H1 (cell line): ENCODE measurements at regions of chr2 and their contacts with region 1.

Region 1: GRCh38 chr2:74142340-74142739 is 5.4 kb downstream of the BOLA3 start:
- DNase-seq: no peak
- H3K4me3 ChIP-seq: no peak overlapping the region
- H3K27ac ChIP-seq: no peak overlapping the region
- H3K4me1 ChIP-seq: peaks cover 0 to 5% (median 2%) of the 10 kb centered on the region in 4 experiments; a peak in 3 of 7 replicates
- H3K27me3 ChIP-seq: no peaks in the 10 kb centered on the region
- CTCF ChIP-seq: peak; percentile 44 to 72 (median 46)
- EP300 ChIP-seq: no peak
- POLR2A ChIP-seq: no peak
- RAD21 ChIP-seq: peak; percentile 48 to 64

Region 2: DNA sequence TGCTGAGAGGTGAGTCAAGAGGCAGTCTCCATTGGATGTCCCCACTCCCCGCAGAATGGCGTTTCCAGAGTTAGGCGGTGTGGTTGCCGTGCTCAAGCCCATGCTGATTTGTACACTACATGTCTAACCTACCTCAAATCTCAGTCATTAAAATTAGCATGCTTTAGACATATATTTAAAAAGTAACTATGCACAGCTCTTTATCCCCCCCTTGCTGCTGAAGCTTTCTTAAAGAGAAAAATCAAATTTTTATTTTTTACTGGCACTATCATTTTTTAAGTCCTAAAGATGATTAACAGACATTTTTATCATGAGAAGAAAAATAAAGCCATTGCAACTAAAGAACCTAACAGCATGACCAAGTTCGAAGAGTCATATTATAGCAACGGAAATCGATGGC is 37.5 kb before region 1 on chr2:
- CTCF ChIA-PET with region 1: interaction called, 10 read pairs
- POLR2A ChIA-PET with region 1: interaction called, 3 read pairs
- DNase-seq: no peak
- H3K4me3 ChIP-seq: no peak overlapping the region
- H3K27ac ChIP-seq: no peak overlapping the region
- H3K4me1 ChIP-seq: peaks cover 4 to 13% (median 12%) of the 10 kb centered on the region in 4 experiments
- H3K27me3 ChIP-seq: no peaks in the 10 kb centered on the region
- CTCF ChIP-seq: no peak
- EP300 ChIP-seq: no peak
- POLR2A ChIP-seq: no peak
- RAD21 ChIP-seq: 0 out of 4 replicates have a peak, but pooled peaks of 1 of the 2 experiments have one; percentile 0

Region 3: DNA sequence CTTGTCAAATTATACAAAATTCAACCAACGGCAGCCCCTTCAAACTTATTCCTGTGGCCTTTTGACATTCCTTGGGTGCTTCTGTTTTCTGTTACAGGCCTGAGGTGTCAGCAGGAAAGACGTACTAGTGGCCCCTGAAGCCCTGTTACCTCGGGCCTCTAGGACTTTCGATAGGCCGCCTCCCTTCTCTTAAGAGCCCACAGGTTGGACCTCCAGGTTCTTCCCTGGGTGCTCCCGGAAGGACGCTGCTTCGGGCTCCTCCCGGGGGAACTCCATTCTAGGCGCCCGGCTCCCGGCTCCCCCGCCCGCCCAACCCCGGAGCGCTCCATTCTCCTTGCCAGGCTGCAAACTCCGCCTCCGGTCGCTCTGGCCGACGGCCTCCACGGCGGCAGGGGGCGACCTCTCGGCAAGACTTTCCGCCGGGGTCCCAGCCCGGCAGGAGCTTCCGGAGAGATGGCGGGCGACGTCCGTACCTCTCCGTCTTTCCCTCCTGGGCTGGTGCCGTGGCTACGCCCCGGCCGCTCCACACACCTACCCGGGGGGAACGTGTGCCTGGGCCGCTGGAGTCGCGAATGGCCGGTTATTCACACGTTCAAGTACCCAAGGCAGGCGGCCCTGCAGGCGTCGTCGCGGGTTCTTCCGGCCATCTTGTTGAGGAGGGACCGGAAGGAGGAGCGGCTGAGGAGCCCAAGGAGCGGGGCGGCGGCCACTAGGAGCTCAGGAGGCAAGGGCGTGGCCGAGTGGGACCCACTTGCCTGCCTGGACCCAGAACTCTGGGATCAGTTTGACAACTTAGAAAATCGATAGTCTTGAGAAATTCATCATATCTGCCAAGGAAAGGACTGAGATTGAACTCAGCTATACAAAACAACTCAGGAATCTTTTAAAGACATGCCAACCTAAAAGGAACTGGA is 22.2 kb before region 1 on chr2:
- CTCF ChIA-PET with region 1: interaction called, 48 read pairs
- POLR2A ChIA-PET with region 1: interaction called, 10 read pairs
- DNase-seq: peak; percentile 54 to 82
- H3K4me3 ChIP-seq: peak overlapping the region; percentile 62 to 80 (median 70)
- H3K27ac ChIP-seq: peak overlapping the region; percentile 88
- H3K4me1 ChIP-seq: no peaks in the 10 kb centered on the region
- H3K27me3 ChIP-seq: peaks cover 0 to 7% (median 0%) of the 10 kb centered on the region in 4 experiments; a peak in 2 of 7 replicates
- CTCF ChIP-seq: peak; percentile 50 to 59 (median 53)
- EP300 ChIP-seq: no peak
- POLR2A ChIP-seq: peak; percentile 44 to 83
- RAD21 ChIP-seq: no peak; a peak in 1 of 4 replicates

Region 4: GRCh38 chr2:74130163-74130995 is 12.0 kb before region 1 on chr2:
- CTCF ChIA-PET with region 1: interaction called, 48 read pairs
- POLR2A ChIA-PET with region 1: interaction called, 8 read pairs
- DNase-seq: no peak
- H3K4me3 ChIP-seq: no peak overlapping the region
- H3K27ac ChIP-seq: no peak overlapping the region
- H3K4me1 ChIP-seq: no peaks in the 10 kb centered on the region; a peak in 1 of 7 replicates
- H3K27me3 ChIP-seq: no peaks in the 10 kb centered on the region
- CTCF ChIP-seq: no peak
- EP300 ChIP-seq: no peak
- POLR2A ChIP-seq: no peak
- RAD21 ChIP-seq: no peak

Region 5: DNA sequence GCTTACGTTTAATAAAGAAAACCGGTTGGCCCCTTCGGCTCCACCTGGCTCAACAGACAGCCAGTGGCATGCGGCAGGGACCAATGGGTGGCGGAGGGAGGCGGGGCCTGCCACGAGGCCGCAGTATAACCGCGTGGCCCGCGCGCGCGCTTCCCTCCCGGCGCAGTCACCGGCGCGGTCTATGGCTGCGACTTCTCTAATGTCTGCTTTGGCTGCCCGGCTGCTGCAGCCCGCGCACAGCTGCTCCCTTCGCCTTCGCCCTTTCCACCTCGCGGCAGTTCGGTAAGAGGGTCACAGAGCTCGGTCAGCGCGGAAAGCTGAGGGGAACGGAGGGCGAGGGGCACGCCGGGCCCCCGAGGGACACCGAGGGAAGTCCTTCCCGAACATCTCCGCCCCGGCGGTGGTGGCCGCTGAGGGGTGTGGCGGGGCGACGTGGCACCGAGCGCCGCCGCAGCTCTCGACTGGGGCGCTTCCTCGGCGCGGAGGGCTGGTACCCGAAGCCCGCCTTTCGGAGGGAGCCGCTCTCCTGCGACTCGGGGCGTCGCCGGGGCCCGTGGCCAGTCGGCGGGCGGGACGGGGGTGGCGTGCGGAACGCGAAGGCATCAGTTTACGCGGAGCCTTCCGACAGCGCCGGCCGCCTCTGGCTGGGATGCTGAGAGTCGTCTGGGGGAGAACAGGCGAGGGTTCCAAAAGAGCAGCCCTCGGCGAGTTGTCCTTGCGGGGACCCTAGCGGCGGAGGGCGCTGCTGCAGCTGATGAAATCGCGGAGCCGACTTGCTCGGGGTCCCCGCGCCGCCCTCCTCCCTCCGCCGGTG is 56.3 kb after region 1 on chr2 and contains the start of gene MTHFD2:
- CTCF ChIA-PET with region 1: no interaction called
- POLR2A ChIA-PET with region 1: interaction called, 2,699 read pairs
- DNase-seq: peak; percentile 94 to 95
- H3K4me3 ChIP-seq: peak within 1 kb of the TSS; percentile 85 to 98 (median 89)
- H3K27ac ChIP-seq: peak within 1 kb of the TSS; percentile 97
- H3K4me1 ChIP-seq: peaks cover 0 to 8% (median 3%) of the 10 kb centered on the region in 4 experiments; a peak in 2 of 7 replicates
- H3K27me3 ChIP-seq: no peaks in the 10 kb centered on the region
- CTCF ChIP-seq: peak; percentile 56 to 81 (median 76)
- EP300 ChIP-seq: peak in 1 of 2 experiments; percentile 66; a peak in 1 of 3 replicates
- POLR2A ChIP-seq: peak; percentile 98
- RAD21 ChIP-seq: peak; percentile 26 to 45
- total RNA-seq, gene MTHFD2: 260 and 291 TPM in 2 replicates

Region 6: GRCh38 chr2:74206180-74206688 is 63.9 kb after region 1 on chr2:
- CTCF ChIA-PET with region 1: interaction called, 3 read pairs
- POLR2A ChIA-PET with region 1: interaction called, 2,699 read pairs
- DNase-seq: no peak
- H3K4me3 ChIP-seq: no peak overlapping the region
- H3K27ac ChIP-seq: no peak overlapping the region
- H3K4me1 ChIP-seq: peaks cover 2 to 18% (median 14%) of the 10 kb centered on the region in 4 experiments
- H3K27me3 ChIP-seq: no peaks in the 10 kb centered on the region
- CTCF ChIP-seq: no peak
- EP300 ChIP-seq: no peak
- POLR2A ChIP-seq: peak in 1 of 2 experiments; percentile 37; a peak in 2 of 3 replicates
- RAD21 ChIP-seq: no peak